ENCODE measurements at regions of chr2 and their contacts with region 1.

Region 1: DNA sequence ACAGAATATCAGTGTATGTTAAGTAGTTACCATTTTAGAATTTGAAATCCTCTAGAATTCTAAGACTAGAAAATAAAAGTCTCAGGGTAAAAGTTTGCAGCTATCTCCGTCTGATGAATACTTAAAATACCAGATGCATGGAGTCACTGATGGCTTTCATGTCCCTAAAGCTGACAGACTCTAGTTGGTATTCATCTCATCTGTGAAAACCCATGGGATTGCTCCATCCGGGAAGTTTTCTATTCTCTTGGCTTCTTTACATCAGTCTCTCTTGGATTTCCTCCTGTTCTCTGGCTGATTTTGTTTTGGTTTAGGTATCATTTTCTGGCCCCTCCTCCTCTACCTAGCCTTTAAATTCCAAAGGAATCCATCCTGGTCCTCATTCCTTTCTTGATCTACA is 465.6 kb upstream of the POU3F3 start:
- DNase-seq: no peak
- H3K4me3 ChIP-seq: no peak overlapping the region
- H3K27ac ChIP-seq: no peak overlapping the region
- H3K4me1 ChIP-seq: no peaks in the 10 kb centered on the region
- H3K27me3 ChIP-seq: no peaks in the 10 kb centered on the region
- CTCF ChIP-seq: no peak
- POLR2A ChIP-seq: no peak

Region 2: GRCh38 chr2:106044859-106045258 is 1656.6 kb after region 1 on chr2:
- intact Hi-C with region 1: loop called (anchors 5 kb)
- DNase-seq: no peak
- H3K4me3 ChIP-seq: no peak overlapping the region
- H3K27ac ChIP-seq: no peak overlapping the region
- H3K4me1 ChIP-seq: no peaks in the 10 kb centered on the region
- H3K27me3 ChIP-seq: no peaks in the 10 kb centered on the region
- CTCF ChIP-seq: no peak
- POLR2A ChIP-seq: no peak

Measured in vagina (tissue), 2 donors.